T-cell (primary cell): ENCODE measurements at regions of chr20 and their contacts with region 1.

Region 1: GRCh38 chr20:4767084-4767483 is 45.4 kb downstream of the PRND start:
- DNase-seq: no peak
- ATAC-seq: no peak
- H3K4me3 ChIP-seq: no peak overlapping the region
- H3K4me3 Mint-ChIP-seq: no peak overlapping the region
- H3K27ac ChIP-seq: no peak overlapping the region
- H3K27ac Mint-ChIP-seq: no peak overlapping the region
- H3K4me1 ChIP-seq: no peaks in the 10 kb centered on the region
- H3K4me1 Mint-ChIP-seq: peaks cover 0 to 4% (median 0%) of the 10 kb centered on the region in 3 donors
- H3K27me3 ChIP-seq: no peaks in the 10 kb centered on the region
- H3K27me3 Mint-ChIP-seq: peaks cover 0 to 6% of the 10 kb centered on the region in 2 donors

Region 2: DNA sequence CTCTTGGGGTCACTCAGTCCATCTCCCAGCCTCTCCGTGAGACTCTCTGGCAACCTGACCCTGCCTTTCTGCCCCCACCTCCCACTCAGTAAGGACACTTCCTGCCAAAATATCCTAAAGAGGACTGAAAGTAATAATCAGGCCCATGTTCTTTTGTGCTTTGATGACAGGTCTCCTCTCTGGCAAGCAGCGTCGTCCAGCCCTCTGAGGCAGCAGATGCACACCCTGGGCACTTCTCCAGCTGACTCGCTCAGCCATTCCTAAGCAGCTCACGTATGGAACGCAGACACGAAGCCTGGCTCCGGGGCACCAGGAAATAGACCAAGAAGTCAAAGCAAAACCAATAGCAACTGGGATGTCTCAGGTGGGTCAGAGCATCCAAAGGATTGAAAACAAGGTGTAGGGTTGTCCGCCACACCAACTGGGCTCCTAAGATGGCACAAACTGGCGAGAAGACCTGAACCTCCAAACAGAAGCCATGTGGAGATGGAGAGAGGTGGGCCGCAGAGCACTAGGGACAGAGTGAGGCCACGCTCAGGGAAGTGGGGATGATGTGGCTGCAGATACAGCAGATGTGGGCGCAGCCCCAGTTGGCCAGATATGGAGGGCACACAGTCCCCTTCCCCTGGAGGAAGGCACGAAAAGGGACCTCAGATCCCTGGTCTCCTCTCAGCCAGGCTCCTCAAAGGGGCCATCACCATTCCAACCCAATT is 53.9 kb after region 1 on chr20:
- CTCF ChIA-PET with region 1: interaction called in 1 of 2 experiments, 10 read pairs
- POLR2A ChIA-PET with region 1: no interaction called
- DNase-seq: no peak
- ATAC-seq: no peak
- H3K4me3 ChIP-seq: peak overlapping the region in 1 of 2 donors; percentile 11
- H3K4me3 Mint-ChIP-seq: peak overlapping the region; percentile 49 to 92 (median 87)
- H3K27ac ChIP-seq: no peak overlapping the region
- H3K27ac Mint-ChIP-seq: peak overlapping the region; percentile 67 to 87
- H3K4me1 ChIP-seq: peaks cover 16 to 42% of the 10 kb centered on the region in 2 experiments
- H3K4me1 Mint-ChIP-seq: peaks cover 43 to 52% (median 52%) of the 10 kb centered on the region in 3 donors
- H3K27me3 ChIP-seq: no peaks in the 10 kb centered on the region
- H3K27me3 Mint-ChIP-seq: no peaks in the 10 kb centered on the region